ENCODE measurements at regions of chr11 and their contacts with region 1.

Region 1: DNA sequence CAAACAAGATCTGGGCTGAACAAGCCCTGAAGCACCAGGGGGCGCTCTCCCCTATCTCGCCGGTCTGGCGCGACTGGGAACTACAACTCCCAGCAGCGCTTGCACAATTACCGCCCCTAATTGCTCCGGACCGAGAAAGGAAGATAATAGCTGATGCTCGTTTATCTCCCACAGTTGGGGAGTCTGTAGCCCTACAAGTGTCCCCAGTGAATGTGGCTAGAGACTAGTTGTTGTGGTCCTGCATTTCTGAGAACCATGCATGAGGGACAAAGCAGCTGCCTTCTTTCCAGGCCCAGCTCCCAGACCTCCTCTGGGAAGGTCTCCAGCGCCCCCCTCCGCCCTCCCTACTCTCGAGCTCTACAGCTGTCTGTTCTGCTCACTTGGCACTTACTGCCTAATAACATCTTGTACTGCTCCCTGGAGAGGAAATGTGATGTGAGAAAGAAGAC is 34.4 kb downstream of the NRXN2 start:
- DNase-seq: peak; percentile 87
- H3K4me3 ChIP-seq: no peak overlapping the region
- H3K27ac ChIP-seq: no peak overlapping the region
- H3K4me1 ChIP-seq: no peaks in the 10 kb centered on the region
- H3K27me3 ChIP-seq: no peaks in the 10 kb centered on the region
- CTCF ChIP-seq: peak; percentile 88

Region 2: DNA sequence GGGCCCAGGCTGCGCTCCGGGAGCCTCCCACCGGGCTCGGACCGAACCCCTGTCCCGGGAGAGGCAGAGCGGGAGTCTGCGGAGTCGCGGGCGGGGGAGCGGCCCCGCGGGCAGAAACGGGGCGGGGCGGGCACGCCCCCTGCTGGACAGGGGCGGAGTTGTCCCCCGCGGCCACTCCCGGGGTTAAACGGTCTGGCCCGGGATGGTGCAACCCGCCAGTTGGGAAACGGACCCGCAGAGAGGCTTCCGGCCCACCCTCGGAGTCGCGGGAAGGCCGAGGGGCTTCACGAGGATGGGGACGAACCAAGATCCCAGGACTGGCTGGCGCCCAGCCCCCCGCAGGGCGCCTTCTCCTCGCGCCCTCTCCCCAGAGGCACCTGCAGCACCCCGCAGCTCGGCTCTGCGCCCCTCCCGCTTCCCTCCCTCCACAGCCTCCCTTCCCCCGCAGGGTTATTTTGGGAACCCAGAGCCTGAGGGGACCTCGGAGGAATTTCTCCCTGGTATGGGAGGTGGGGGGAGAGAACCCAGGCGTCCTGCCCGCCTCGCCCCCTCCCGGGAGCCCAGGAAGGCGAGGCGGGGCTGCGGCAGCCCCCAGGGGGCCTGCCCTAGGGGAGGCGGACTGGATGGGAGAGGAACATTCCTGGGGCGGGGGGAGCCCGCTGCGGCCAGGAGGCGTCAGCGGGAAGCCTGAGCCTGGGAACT is 54.5 kb after region 1 on chr11:
- intact Hi-C with region 1: loop called (anchors 5 kb)
- DNase-seq: peak; percentile 74
- H3K4me3 ChIP-seq: peak overlapping the region; percentile 50
- H3K27ac ChIP-seq: peak overlapping the region; percentile 70
- H3K4me1 ChIP-seq: peaks cover 19% of the 10 kb centered on the region
- H3K27me3 ChIP-seq: peaks cover 43% of the 10 kb centered on the region
- CTCF ChIP-seq: peak; percentile 92

Measured in colonic mucosa (tissue), 4 donors.